Activated naive CD4-positive, alpha-beta T cell treated with anti-CD3 and anti-CD28 coated beads for 36 hours (primary cell): ENCODE measurements at regions of chr2 and their contacts with region 1.

Region 1: GRCh38 chr2:84970868-84971509 is at the start of gene KCMF1:
- DNase-seq: peak; percentile 80
- H3K4me3 Mint-ChIP-seq: peak within 1 kb of the TSS; percentile 98
- H3K27ac Mint-ChIP-seq: peak within 1 kb of the TSS; percentile 100
- H3K4me1 Mint-ChIP-seq: peaks cover 46% of the 10 kb centered on the region
- H3K27me3 Mint-ChIP-seq: no peaks in the 10 kb centered on the region
- total RNA-seq, gene KCMF1: 105 to 109 TPM

Region 2: GRCh38 chr2:84879584-84880394 is 91.2 kb before region 1 on chr2:
- CTCF ChIA-PET with region 1: no interaction called
- intact Hi-C with region 1: no loop called
- DNase-seq: peak; percentile 53
- H3K4me3 Mint-ChIP-seq: peak overlapping the region; percentile 93
- H3K27ac Mint-ChIP-seq: peak overlapping the region; percentile 92
- H3K4me1 Mint-ChIP-seq: peaks cover 60% of the 10 kb centered on the region
- H3K27me3 Mint-ChIP-seq: no peaks in the 10 kb centered on the region

Region 3: GRCh38 chr2:84939426-84940087 is 31.4 kb before region 1 on chr2:
- CTCF ChIA-PET with region 1: interaction called, 12 read pairs
- intact Hi-C with region 1: loop called (anchors 1 kb)
- DNase-seq: peak; percentile 78
- H3K4me3 Mint-ChIP-seq: peak overlapping the region; percentile 72
- H3K27ac Mint-ChIP-seq: peak overlapping the region; percentile 99
- H3K4me1 Mint-ChIP-seq: peaks cover 75% of the 10 kb centered on the region
- H3K27me3 Mint-ChIP-seq: no peaks in the 10 kb centered on the region

Region 4: GRCh38 chr2:84989422-84989821 is 18.4 kb after region 1 on chr2:
- CTCF ChIA-PET with region 1: interaction called, 4 read pairs
- intact Hi-C with region 1: loop called (anchors 1 kb)
- DNase-seq: no peak
- H3K4me3 Mint-ChIP-seq: no peak overlapping the region
- H3K27ac Mint-ChIP-seq: no peak overlapping the region
- H3K4me1 Mint-ChIP-seq: peaks cover 45% of the 10 kb centered on the region
- H3K27me3 Mint-ChIP-seq: no peaks in the 10 kb centered on the region

Region 5: GRCh38 chr2:85011747-85012146 is 40.8 kb after region 1 on chr2:
- CTCF ChIA-PET with region 1: interaction called, 10 read pairs
- intact Hi-C with region 1: loop called (anchors 1 kb)
- DNase-seq: no peak
- H3K4me3 Mint-ChIP-seq: no peak overlapping the region
- H3K27ac Mint-ChIP-seq: peak overlapping the region; percentile 89
- H3K4me1 Mint-ChIP-seq: peaks cover 86% of the 10 kb centered on the region
- H3K27me3 Mint-ChIP-seq: no peaks in the 10 kb centered on the region

Region 6: DNA sequence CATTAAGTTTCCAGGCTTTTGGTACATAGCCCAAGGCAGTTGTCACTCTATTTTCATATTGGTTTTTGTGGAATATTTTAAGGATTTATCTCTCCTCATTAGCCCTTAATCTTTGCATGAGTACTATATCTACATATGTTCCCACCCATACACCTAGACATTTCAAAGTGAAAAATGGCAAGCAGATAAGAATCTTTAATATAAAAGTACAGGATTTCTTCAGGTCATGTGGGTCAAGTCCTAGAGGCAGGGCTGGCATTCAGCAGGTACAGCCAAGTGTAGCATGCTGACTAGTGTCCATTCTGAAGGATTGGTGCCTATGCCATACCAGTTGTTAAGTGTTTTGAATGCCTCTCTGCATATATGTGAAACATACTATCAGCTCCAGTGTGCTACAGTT is 66.1 kb after region 1 on chr2:
- CTCF ChIA-PET with region 1: no interaction called
- intact Hi-C with region 1: loop called (anchors 5 kb)
- DNase-seq: no peak
- H3K4me3 Mint-ChIP-seq: no peak overlapping the region
- H3K27ac Mint-ChIP-seq: no peak overlapping the region
- H3K4me1 Mint-ChIP-seq: peaks cover 7% of the 10 kb centered on the region
- H3K27me3 Mint-ChIP-seq: no peaks in the 10 kb centered on the region

Region 7: DNA sequence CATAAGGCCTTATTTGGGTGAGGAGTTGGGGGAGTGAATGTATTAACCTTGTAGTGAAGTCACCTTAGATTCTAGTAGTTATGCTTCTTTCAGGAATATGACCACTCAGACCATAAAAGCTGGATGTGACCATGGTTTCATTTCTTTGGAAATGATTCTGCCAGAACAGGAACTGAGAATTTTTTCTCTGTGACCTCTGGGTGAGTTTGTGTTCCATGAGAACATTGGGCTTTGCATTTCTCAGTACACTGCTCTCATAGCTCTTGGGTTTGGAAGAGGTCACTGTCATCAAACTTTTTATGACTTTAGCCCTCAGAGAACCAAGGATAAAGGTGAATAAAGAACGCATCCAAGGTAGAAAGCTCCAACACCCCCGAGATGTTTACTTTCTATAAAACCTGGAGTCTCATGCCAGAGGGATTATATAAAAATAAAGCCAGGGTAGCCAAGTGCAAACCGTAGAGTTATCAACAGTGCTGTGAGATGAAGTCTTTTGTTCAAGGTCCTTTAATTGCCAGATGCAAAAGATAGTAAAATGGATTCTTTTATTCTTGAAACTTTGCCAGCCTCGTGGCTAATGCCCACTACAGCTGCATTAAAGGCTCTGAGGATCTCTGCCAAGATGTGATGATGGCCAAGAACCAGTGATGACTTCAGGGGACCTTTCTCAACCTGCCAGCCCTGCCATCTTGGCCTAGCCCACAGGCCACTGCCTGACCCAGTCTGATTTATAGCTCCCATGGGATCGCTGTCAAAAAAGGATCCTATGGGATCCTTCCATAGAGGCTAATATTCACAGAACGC is 540.2 kb after region 1 on chr2:
- CTCF ChIA-PET with region 1: no interaction called
- intact Hi-C with region 1: no loop called
- DNase-seq: no peak
- H3K4me3 Mint-ChIP-seq: no peak overlapping the region
- H3K27ac Mint-ChIP-seq: no peak overlapping the region
- H3K4me1 Mint-ChIP-seq: no peaks in the 10 kb centered on the region
- H3K27me3 Mint-ChIP-seq: no peaks in the 10 kb centered on the region